ENCODE measurements at regions of chr5 and their contacts with region 1.

Region 1: GRCh38 chr5:173293817-173294672 is 34.2 kb downstream of the STC2 start:
- DNase-seq: peak in 3 of 4 donors; percentile 55 to 83 (median 79)
- ATAC-seq: peak; percentile 91
- H3K4me3 ChIP-seq: no peak overlapping the region
- H3K27ac ChIP-seq: no peak overlapping the region
- H3K4me1 ChIP-seq: peaks cover 3 to 5% of the 10 kb centered on the region in 2 donors
- H3K27me3 ChIP-seq: peaks cover 2 to 65% of the 10 kb centered on the region in 2 donors
- CTCF ChIP-seq: peak; percentile 67 to 74

Region 2: DNA sequence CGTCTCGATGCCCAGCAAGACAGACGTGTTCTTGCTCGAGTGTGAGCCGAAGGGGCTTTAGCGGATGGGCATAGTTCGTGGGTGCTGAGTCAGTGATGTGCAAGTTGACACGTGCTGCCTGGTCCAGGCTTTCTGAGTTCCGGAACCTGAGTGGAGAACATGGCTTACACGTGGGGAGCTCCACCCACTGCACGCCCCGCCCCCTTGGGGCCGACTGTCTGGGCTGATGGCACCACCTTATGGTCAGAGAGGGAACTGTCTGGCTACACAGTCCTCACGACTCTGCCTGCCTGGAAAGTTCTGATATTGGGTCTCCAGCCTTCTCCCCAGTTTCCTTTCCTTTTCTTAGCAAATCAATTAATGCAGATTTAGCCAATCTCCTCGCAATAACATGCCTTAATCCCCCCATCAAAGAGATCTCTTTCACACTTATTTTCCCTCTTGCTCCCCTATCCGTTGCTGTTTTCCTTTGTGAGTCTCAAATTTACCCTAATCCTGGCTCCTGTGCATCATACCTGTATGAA is 38.0 kb after region 1 on chr5:
- intact Hi-C with region 1: loop called in 1 of 2 experiments (anchors 2 kb)
- DNase-seq: peak in 3 of 4 donors; percentile 75 to 89 (median 89)
- ATAC-seq: peak; percentile 88
- H3K4me3 ChIP-seq: no peak overlapping the region
- H3K27ac ChIP-seq: no peak overlapping the region
- H3K4me1 ChIP-seq: peaks cover 17 to 31% of the 10 kb centered on the region in 2 donors
- H3K27me3 ChIP-seq: peaks cover 30 to 68% of the 10 kb centered on the region in 2 donors
- CTCF ChIP-seq: peak; percentile 82 to 91

Region 3: GRCh38 chr5:173573126-173573960 is 279.3 kb after region 1 on chr5:
- intact Hi-C with region 1: loop called in 1 of 2 experiments (anchors 10 kb)
- DNase-seq: peak; percentile 67 to 96 (median 76)
- ATAC-seq: peak; percentile 98
- H3K4me3 ChIP-seq: no peak overlapping the region
- H3K27ac ChIP-seq: no peak overlapping the region
- H3K4me1 ChIP-seq: no peaks in the 10 kb centered on the region
- H3K27me3 ChIP-seq: peaks cover 0 to 18% of the 10 kb centered on the region in 2 donors
- CTCF ChIP-seq: peak; percentile 96 to 98

Measured in left lung (tissue), 14 donors.